Naive thymus-derived CD4-positive, alpha-beta T cell (primary cell): ENCODE measurements at regions of chr11 and their contacts with region 1.

Region 1: GRCh38 chr11:93741094-93741881 is at the starts of genes C11orf54 and TAF1D:
- DNase-seq: peak; percentile 85 to 98 (median 96)
- ATAC-seq: peak; percentile 96
- H3K4me3 ChIP-seq: peak within 1 kb of the TSS; percentile 88
- H3K4me3 Mint-ChIP-seq: peak within 1 kb of the TSS; percentile 95 to 100 (median 100)
- H3K27ac ChIP-seq: peak within 1 kb of the TSS; percentile 84
- H3K27ac Mint-ChIP-seq: peak within 1 kb of the TSS; percentile 98 to 100 (median 100)
- H3K4me1 ChIP-seq: peaks cover 28 to 31% of the 10 kb centered on the region in 2 donors
- H3K4me1 Mint-ChIP-seq: peaks cover 37 to 92% (median 71%) of the 10 kb centered on the region in 7 donors
- H3K27me3 ChIP-seq: no peaks in the 10 kb centered on the region
- H3K27me3 Mint-ChIP-seq: peaks cover 0 to 3% (median 0%) of the 10 kb centered on the region in 5 donors
- total RNA-seq, gene C11orf54: 16.4 to 42.5 (median 27.2) TPM
- total RNA-seq, gene TAF1D: 116 to 197 (median 183) TPM

Region 2: GRCh38 chr11:93197380-93198214 is 543.7 kb before region 1 on chr11 and contains the start of gene SLC36A4:
- CTCF ChIA-PET with region 1: no interaction called
- POLR2A ChIA-PET with region 1: interaction called, 16 read pairs
- intact Hi-C with region 1: loop called (anchors 1 kb)
- DNase-seq: peak; percentile 78 to 90 (median 88)
- ATAC-seq: peak; percentile 94
- H3K4me3 ChIP-seq: peak within 1 kb of the TSS; percentile 54
- H3K4me3 Mint-ChIP-seq: peak within 1 kb of the TSS; percentile 88 to 98 (median 95)
- H3K27ac ChIP-seq: peak within 1 kb of the TSS; percentile 96
- H3K27ac Mint-ChIP-seq: peak within 1 kb of the TSS; percentile 87 to 99 (median 97)
- H3K4me1 ChIP-seq: peaks cover 0 to 4% of the 10 kb centered on the region in 2 donors
- H3K4me1 Mint-ChIP-seq: peaks cover 15 to 40% (median 30%) of the 10 kb centered on the region in 7 donors
- H3K27me3 ChIP-seq: no peaks in the 10 kb centered on the region
- H3K27me3 Mint-ChIP-seq: peaks cover 0 to 24% (median 5%) of the 10 kb centered on the region in 5 donors
- total RNA-seq, gene SLC36A4: 12.0 to 22.0 (median 20.0) TPM

Region 3: DNA sequence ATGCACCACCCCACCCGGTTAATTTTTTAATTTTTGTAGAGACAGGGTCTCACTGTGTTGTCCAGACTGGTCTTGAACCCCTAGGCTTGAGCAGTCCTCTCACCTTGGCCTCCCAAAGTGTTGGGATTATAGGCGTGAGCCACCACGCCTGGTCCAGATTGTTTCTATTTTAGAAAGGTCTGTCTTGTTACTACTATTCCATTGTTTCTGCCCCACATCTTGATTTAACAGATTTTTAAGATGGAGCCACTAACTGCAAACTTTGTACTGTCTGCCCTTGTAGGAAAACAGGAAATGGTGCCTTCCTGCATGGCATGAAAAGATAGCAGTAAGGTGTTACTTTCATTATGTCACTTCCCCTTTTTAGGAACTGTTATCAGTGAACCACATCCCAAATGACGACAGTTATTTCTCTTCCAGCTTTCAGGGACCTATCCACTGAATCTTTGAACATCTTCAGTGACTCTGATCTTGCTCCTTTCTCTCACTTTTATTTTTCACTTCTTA is 23.2 kb before region 1 on chr11:
- CTCF ChIA-PET with region 1: no interaction called
- POLR2A ChIA-PET with region 1: interaction called, 14 read pairs
- intact Hi-C with region 1: no loop called
- DNase-seq: peak in 1 of 9 donors; percentile 13
- ATAC-seq: peak; percentile 71
- H3K4me3 ChIP-seq: peak overlapping the region; percentile 5
- H3K4me3 Mint-ChIP-seq: peak overlapping the region; percentile 18 to 81 (median 56)
- H3K27ac ChIP-seq: no peak overlapping the region
- H3K27ac Mint-ChIP-seq: peak overlapping the region; percentile 37 to 90 (median 70)
- H3K4me1 ChIP-seq: peaks cover 9% of the 10 kb centered on the region in 2 donors
- H3K4me1 Mint-ChIP-seq: peaks cover 17 to 33% (median 23%) of the 10 kb centered on the region in 7 donors
- H3K27me3 ChIP-seq: no peaks in the 10 kb centered on the region
- H3K27me3 Mint-ChIP-seq: no peaks in the 10 kb centered on the region

Region 4: GRCh38 chr11:93967258-93967657 is 226.0 kb after region 1 on chr11:
- CTCF ChIA-PET with region 1: no interaction called
- POLR2A ChIA-PET with region 1: no interaction called
- intact Hi-C with region 1: no loop called
- DNase-seq: no peak
- ATAC-seq: no peak
- H3K4me3 ChIP-seq: no peak overlapping the region
- H3K4me3 Mint-ChIP-seq: no peak overlapping the region
- H3K27ac ChIP-seq: no peak overlapping the region
- H3K27ac Mint-ChIP-seq: no peak overlapping the region
- H3K4me1 ChIP-seq: no peaks in the 10 kb centered on the region
- H3K4me1 Mint-ChIP-seq: no peaks in the 10 kb centered on the region
- H3K27me3 ChIP-seq: no peaks in the 10 kb centered on the region
- H3K27me3 Mint-ChIP-seq: peaks cover 0 to 32% (median 19%) of the 10 kb centered on the region in 5 donors

Region 5: DNA sequence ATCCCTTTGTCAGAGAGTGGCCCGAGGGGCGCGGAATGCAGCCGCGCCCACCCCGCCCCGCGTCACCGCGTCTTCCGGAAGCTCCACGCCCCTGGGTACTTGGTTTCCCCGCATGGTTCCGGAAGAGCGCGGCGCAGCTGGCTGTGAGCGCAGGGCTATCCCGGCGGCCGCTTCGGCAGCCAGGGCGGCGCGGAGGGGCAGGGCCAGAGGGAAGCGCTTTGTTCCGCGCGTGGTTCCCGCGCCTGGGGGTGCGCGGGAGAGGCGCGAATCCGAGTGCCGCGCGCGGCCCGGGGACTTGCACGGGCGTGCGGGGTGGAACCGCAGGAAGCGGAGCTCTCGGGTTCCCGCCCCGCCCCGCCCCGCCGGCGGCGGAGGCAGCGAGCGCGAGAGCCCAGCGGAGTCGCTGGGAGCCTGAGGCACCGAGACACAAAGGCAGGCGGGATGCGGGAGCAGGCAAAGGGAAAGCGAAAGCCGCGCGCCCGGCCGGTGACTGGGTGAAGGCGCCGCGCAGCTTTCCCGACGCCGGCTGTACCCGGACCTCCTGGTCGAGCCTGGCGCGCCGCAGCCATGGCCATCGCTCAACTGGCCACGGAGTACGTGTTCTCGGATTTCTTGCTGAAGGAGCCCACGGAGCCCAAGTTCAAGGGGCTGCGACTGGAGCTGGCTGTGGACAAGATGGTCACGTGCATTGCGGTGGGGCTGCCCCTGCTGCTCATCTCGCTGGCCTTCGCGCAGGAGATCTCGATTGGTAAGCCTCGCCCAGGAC is 387.6 kb after region 1 on chr11 and contains the start of gene PANX1:
- CTCF ChIA-PET with region 1: no interaction called
- POLR2A ChIA-PET with region 1: interaction called, 5 read pairs
- intact Hi-C with region 1: loop called (anchors 1 to 2 kb)
- DNase-seq: peak; percentile 48 to 80 (median 74)
- ATAC-seq: peak; percentile 87
- H3K4me3 ChIP-seq: peak within 1 kb of the TSS; percentile 97
- H3K4me3 Mint-ChIP-seq: peak within 1 kb of the TSS in 2 of 10 donors; percentile 85 to 92
- H3K27ac ChIP-seq: peak within 1 kb of the TSS; percentile 73
- H3K27ac Mint-ChIP-seq: peak within 1 kb of the TSS; percentile 77 to 96 (median 89)
- H3K4me1 ChIP-seq: peaks cover 21 to 29% of the 10 kb centered on the region in 2 donors
- H3K4me1 Mint-ChIP-seq: peaks cover 18 to 32% (median 27%) of the 10 kb centered on the region in 7 donors
- H3K27me3 ChIP-seq: no peaks in the 10 kb centered on the region
- H3K27me3 Mint-ChIP-seq: no peaks in the 10 kb centered on the region
- total RNA-seq, gene PANX1: 5.6 to 14.8 (median 6.1) TPM

Region 6: GRCh38 chr11:95089620-95090542 is 1348.6 kb after region 1 on chr11 and contains the start of gene ENDOD1:
- CTCF ChIA-PET with region 1: no interaction called
- POLR2A ChIA-PET with region 1: interaction called, 8 read pairs
- intact Hi-C with region 1: loop called in 1 of 2 experiments (anchors 2 kb)
- DNase-seq: peak; percentile 81 to 89 (median 87)
- ATAC-seq: peak; percentile 98
- H3K4me3 ChIP-seq: peak within 1 kb of the TSS; percentile 79
- H3K4me3 Mint-ChIP-seq: peak within 1 kb of the TSS; percentile 86 to 95 (median 92)
- H3K27ac ChIP-seq: peak within 1 kb of the TSS; percentile 87
- H3K27ac Mint-ChIP-seq: peak within 1 kb of the TSS; percentile 96 to 99 (median 98)
- H3K4me1 ChIP-seq: peaks cover 16 to 31% of the 10 kb centered on the region in 2 donors
- H3K4me1 Mint-ChIP-seq: peaks cover 24 to 61% (median 49%) of the 10 kb centered on the region in 7 donors
- H3K27me3 ChIP-seq: no peaks in the 10 kb centered on the region
- H3K27me3 Mint-ChIP-seq: no peaks in the 10 kb centered on the region
- total RNA-seq, gene ENDOD1: 4.7 to 23.2 (median 8.6) TPM